K562 (cell line): ENCODE measurements at regions of chr10 and their contacts with region 1.

Region 1: DNA sequence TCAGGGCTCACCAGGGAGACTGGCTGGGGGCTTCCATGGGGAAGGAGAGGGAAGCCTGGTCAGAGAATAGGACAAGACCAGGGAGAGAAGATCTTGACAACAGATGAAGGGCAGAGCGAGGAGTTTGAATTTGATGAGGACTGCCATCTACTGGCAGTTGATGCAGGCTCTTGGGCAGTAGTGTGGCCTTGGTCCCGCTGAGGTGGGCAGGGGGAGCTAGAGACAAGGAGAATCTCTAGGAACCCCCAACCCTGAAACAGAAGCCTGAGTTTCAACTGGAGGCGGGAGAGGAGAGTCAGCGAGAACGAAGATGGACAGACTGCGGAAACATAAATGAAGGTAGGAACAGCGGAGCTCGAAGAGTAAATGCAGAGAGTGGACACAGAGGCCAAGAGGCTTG is 81.0 kb downstream of the PPP1R3C start:
- DNase-seq: peak; percentile 27 to 74 (median 48)
- ATAC-seq: peak; percentile 96
- H3K4me3 ChIP-seq: no peak overlapping the region
- H3K27ac ChIP-seq: no peak overlapping the region
- H3K4me1 ChIP-seq: no peaks in the 10 kb centered on the region; a peak in 2 of 5 replicates
- H3K27me3 ChIP-seq: no peaks in the 10 kb centered on the region
- CTCF ChIP-seq: peak; percentile 85 to 99 (median 98)
- EP300 ChIP-seq: no peak
- POLR2A ChIP-seq: no peak
- RAD21 ChIP-seq: peak; percentile 93 to 95

Region 2: DNA sequence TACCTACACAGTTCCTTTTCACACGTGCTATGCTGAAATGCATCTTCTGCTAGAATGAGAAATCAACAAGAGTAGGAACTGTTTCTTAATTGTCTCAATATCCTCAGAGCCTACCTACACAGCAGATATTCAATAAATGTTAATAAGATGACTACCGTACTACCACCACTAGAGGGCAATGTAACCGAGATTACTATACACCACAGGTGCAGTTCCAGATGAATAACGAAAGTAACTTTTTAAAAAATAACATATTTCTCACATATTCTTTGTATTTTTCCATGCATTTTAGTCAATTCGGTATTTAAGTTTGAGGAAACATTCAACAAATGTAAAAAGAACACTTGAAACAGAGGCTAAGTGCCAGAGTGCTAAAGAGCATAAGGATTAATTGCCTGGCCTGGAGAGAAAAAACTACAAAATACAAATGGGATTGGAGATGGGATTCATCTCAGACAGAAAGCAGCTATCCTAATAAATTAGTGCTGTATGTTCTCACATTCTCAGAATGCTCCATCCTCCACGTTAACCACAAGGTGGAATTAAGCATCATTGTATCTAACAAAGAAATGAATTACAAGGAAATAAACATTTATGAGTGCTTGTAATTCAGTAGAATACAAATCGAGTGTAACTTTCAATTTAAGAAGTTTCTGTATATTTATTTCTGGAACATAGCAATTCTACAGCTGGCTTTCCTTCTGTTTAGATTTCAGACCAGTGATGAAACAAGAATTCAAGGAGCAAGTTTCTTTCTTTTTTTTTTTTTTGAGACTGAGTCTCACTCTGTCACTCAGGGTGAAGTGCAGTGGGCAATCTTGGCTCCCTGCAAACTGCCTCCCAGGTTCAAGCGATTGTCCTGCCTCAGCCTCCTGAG is 162.0 kb before region 1 on chr10:
- CTCF ChIA-PET with region 1: interaction called, 4 read pairs
- POLR2A ChIA-PET with region 1: no interaction called
- in situ Hi-C with region 1: no loop called
- intact Hi-C with region 1: loop called (anchors 2 kb)
- DNase-seq: peak; percentile 15 to 63 (median 24)
- ATAC-seq: peak; percentile 87
- H3K4me3 ChIP-seq: no peak overlapping the region
- H3K27ac ChIP-seq: no peak overlapping the region
- H3K4me1 ChIP-seq: no peaks in the 10 kb centered on the region
- H3K27me3 ChIP-seq: no peaks in the 10 kb centered on the region; a peak in 1 of 5 replicates
- CTCF ChIP-seq: peak in 2 of 3 experiments; percentile 27 to 52; a peak in 3 of 6 replicates
- EP300 ChIP-seq: no peak
- POLR2A ChIP-seq: no peak
- RAD21 ChIP-seq: peak; percentile 55 to 74; a peak in 3 of 4 replicates

Region 3: DNA sequence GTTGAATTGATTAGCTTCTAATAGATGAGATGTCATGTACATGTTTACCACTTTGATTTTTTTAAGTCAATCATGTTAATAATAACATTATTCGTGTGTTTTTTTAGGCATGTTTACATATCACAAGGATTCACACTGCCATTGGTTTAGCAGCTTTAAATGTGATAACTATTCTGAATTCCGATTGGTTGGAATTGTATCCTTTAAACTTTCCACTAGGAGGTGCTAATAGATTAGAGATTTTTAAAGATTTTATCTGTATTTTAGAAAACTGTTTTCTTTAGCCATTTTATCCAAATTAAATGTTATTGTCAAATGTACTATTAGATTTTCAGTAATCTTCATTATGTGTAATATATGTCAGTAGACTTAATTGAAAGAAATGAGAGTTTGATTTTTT is 58.5 kb before region 1 on chr10:
- CTCF ChIA-PET with region 1: interaction called, 4 read pairs
- POLR2A ChIA-PET with region 1: no interaction called
- in situ Hi-C with region 1: no loop called
- intact Hi-C with region 1: loop called (anchors 5 kb)
- DNase-seq: peak in 2 of 4 experiments; percentile 3 to 27
- ATAC-seq: no peak
- H3K4me3 ChIP-seq: no peak overlapping the region
- H3K27ac ChIP-seq: no peak overlapping the region
- H3K4me1 ChIP-seq: no peaks in the 10 kb centered on the region
- H3K27me3 ChIP-seq: no peaks in the 10 kb centered on the region
- CTCF ChIP-seq: peak in 1 of 3 experiments; percentile 41; a peak in 3 of 6 replicates
- EP300 ChIP-seq: no peak
- POLR2A ChIP-seq: no peak
- RAD21 ChIP-seq: peak; percentile 53 to 58

Region 4: DNA sequence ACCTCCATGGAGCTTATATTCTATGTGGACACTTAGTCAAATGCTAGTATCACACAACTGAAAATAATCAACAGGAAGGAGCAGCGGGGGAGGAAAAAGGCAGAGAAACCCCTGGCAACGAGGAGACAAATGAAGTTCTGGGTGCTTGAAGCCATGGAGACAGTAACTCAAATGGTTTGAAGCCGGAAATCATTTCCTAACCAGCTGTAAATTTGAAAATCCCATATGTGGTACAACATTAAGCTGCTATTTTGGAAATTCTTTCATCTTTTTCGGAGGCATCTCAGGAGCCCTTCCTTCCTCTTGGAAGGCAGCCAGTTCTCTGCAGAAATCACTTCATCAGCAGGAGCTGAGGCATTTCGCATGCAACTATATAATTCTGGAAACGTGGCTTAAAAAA is 10.4 kb before region 1 on chr10:
- CTCF ChIA-PET with region 1: no interaction called
- POLR2A ChIA-PET with region 1: no interaction called
- in situ Hi-C with region 1: no loop called
- intact Hi-C with region 1: no loop called
- DNase-seq: no peak
- ATAC-seq: no peak
- H3K4me3 ChIP-seq: no peak overlapping the region
- H3K27ac ChIP-seq: no peak overlapping the region
- H3K4me1 ChIP-seq: no peaks in the 10 kb centered on the region
- H3K27me3 ChIP-seq: no peaks in the 10 kb centered on the region; a peak in 1 of 5 replicates
- CTCF ChIP-seq: no peak
- EP300 ChIP-seq: no peak
- POLR2A ChIP-seq: no peak
- RAD21 ChIP-seq: no peak

Region 5: GRCh38 chr10:91575044-91575610 is 23.3 kb after region 1 on chr10:
- CTCF ChIA-PET with region 1: no interaction called
- POLR2A ChIA-PET with region 1: no interaction called
- in situ Hi-C with region 1: no loop called
- intact Hi-C with region 1: no loop called
- DNase-seq: no peak
- ATAC-seq: no peak
- H3K4me3 ChIP-seq: no peak overlapping the region
- H3K27ac ChIP-seq: no peak overlapping the region
- H3K4me1 ChIP-seq: peaks cover 0 to 14% of the 10 kb centered on the region in 2 experiments; a peak in 4 of 5 replicates
- H3K27me3 ChIP-seq: no peaks in the 10 kb centered on the region
- CTCF ChIP-seq: no peak
- EP300 ChIP-seq: no peak
- POLR2A ChIP-seq: no peak
- RAD21 ChIP-seq: no peak

Region 6: DNA sequence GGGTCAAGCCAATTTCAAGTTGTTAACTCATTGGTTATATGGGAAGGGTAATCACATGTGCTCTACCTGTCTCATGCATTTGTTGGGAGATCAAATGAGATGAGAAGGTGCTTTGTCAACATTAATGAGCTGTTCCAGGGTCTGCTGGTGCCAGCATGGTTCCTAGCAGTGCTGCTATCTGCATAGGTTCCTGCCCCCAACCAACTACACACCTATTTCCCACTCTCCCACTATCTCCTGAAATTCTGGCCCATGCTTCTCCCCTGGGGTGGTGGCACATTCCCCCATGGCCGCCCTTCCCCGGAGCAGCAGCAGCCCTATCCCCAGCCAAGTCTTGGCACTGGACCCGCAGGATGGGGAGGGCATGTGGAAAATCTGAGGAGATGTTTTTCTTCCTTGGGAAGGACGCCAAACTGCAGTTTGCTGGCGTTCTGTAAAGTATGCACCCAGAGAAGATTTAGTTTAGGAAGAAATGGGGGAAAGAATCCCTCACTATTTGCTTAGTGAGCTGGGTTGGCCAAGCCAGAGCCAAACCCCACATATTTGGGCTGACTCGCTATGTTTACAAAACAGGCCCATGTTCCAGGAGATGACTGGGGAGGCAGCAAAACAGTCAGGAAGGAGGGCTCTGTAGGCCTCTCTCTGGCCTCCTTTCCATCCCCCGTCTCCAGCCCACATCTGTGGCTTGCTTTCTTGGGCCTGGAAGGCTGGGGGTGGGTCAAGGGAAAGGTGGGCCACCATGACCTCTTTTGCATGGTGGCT is 38.5 kb after region 1 on chr10:
- CTCF ChIA-PET with region 1: interaction called, 3 read pairs
- POLR2A ChIA-PET with region 1: no interaction called
- in situ Hi-C with region 1: no loop called
- intact Hi-C with region 1: loop called (anchors 5 kb)
- DNase-seq: no peak
- ATAC-seq: peak; percentile 40
- H3K4me3 ChIP-seq: no peak overlapping the region
- H3K27ac ChIP-seq: peak overlapping the region; percentile 64
- H3K4me1 ChIP-seq: peaks cover 23 to 59% of the 10 kb centered on the region in 2 experiments
- H3K27me3 ChIP-seq: no peaks in the 10 kb centered on the region
- CTCF ChIP-seq: no peak
- EP300 ChIP-seq: no peak
- POLR2A ChIP-seq: no peak
- RAD21 ChIP-seq: no peak

Region 7: GRCh38 chr10:91694170-91694794 is 142.4 kb after region 1 on chr10:
- CTCF ChIA-PET with region 1: interaction called, 10 read pairs
- POLR2A ChIA-PET with region 1: no interaction called
- in situ Hi-C with region 1: loop called (anchors 5 kb)
- intact Hi-C with region 1: loop called (anchors 1 kb)
- DNase-seq: peak; percentile 42 to 59 (median 44)
- ATAC-seq: peak; percentile 74
- H3K4me3 ChIP-seq: no peak overlapping the region
- H3K27ac ChIP-seq: no peak overlapping the region
- H3K4me1 ChIP-seq: peaks cover 0 to 6% of the 10 kb centered on the region in 2 experiments; a peak in 2 of 5 replicates
- H3K27me3 ChIP-seq: no peaks in the 10 kb centered on the region
- CTCF ChIP-seq: peak; percentile 57 to 75 (median 68)
- EP300 ChIP-seq: no peak
- POLR2A ChIP-seq: no peak
- RAD21 ChIP-seq: peak; percentile 79 to 90

Region 8: DNA sequence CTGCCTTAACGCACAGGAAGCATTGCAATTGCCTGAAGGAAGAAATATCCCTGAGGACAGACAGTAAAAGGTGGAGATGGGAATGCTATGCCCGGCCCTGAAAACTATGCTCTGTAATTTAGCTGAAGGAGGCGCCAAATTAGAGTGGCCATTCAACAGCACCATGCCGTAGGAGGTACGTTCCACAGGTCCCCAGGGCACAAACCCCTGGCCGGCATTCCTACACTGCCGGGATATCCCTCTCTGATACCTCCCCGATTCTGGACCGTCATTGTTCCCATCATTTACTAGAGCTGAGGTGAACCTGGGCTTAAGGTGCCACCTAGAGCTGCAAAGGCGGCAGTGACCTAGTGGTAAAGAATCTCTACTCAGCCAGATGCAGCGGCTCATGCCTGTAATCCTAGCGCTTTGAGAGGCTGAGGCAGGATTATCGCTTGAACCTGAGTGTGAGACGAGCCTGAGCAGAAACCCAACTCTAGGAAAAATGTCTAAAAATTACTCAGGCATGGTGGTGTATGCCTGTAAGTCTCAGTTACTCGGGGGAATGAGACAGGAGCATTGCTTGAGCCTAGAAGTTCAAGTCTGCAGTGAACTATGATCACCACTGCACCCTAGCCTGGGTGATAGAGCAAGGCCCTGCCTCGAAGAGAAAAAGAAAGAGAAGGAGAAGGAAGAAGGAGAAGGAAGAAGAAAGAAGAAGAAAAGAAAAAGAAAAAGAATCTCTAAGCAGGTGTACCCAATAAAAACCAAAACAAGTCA is 193.4 kb after region 1 on chr10:
- CTCF ChIA-PET with region 1: no interaction called
- POLR2A ChIA-PET with region 1: no interaction called
- in situ Hi-C with region 1: no loop called
- intact Hi-C with region 1: loop called (anchors 5 kb)
- DNase-seq: peak in 1 of 4 experiments; percentile 8
- ATAC-seq: peak; percentile 78
- H3K4me3 ChIP-seq: no peak overlapping the region
- H3K27ac ChIP-seq: no peak overlapping the region
- H3K4me1 ChIP-seq: no peaks in the 10 kb centered on the region; a peak in 1 of 5 replicates
- H3K27me3 ChIP-seq: peaks cover 0 to 6% of the 10 kb centered on the region in 2 experiments; a peak in 2 of 5 replicates
- CTCF ChIP-seq: peak; percentile 17 to 37 (median 27); a peak in 3 of 6 replicates
- EP300 ChIP-seq: no peak
- POLR2A ChIP-seq: no peak
- RAD21 ChIP-seq: peak in 1 of 2 experiments; percentile 56; a peak in 2 of 4 replicates

Region 9: DNA sequence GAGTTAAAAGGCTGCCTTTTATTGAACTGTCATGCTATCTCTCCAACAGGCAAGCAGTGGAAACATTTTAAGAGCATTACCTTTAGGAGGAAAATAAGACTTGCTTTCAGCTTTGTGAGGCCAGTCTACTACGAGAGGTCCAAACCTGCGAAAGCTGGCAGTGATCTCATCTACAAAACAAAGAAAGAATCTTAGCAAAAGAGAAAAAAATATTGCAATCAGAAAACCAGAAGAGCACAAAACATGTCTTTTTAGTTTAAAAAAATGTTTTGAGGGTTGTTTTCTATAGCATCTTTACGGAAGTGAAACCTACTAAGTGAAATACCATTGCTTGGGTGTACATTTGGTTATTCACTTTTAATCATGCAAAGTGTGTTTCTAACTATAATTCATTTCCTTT is 591.1 kb after region 1 on chr10:
- CTCF ChIA-PET with region 1: no interaction called
- POLR2A ChIA-PET with region 1: no interaction called
- in situ Hi-C with region 1: no loop called
- intact Hi-C with region 1: no loop called
- DNase-seq: no peak
- ATAC-seq: no peak
- H3K4me3 ChIP-seq: no peak overlapping the region
- H3K27ac ChIP-seq: no peak overlapping the region
- H3K4me1 ChIP-seq: no peaks in the 10 kb centered on the region
- H3K27me3 ChIP-seq: no peaks in the 10 kb centered on the region
- CTCF ChIP-seq: no peak
- EP300 ChIP-seq: no peak
- POLR2A ChIP-seq: no peak
- RAD21 ChIP-seq: no peak